Mucosa of descending colon (tissue), 3 donors: ENCODE measurements at regions of chr3 and their contacts with region 1.

Region 1: DNA sequence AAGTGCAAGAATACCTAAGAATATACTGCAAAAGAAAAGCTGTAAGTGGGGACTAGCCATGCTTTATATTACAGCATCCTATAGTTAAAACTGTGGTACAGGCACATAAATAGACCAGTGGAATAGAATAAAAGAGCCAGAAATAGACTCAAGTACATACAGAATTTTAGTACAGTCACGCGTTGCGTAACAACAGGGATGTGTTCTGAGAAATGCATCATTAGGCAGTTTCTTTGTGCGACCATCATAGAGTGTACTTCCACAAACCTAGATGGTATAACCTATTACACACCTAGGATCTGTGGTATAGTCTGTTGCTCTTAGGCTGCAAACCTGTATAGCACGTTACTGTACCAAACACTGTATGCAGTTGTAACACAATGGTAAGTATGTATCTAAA is 61.8 kb downstream of the PCCB start:
- DNase-seq: no peak
- ATAC-seq: no peak
- H3K4me3 ChIP-seq: no peak overlapping the region
- H3K4me1 ChIP-seq: no peaks in the 10 kb centered on the region
- CTCF ChIP-seq: no peak

Region 2: GRCh38 chr3:136297826-136298225 is 14.1 kb before region 1 on chr3:
- intact Hi-C with region 1: loop called in 1 of 2 experiments (anchors 2 kb)
- DNase-seq: no peak
- ATAC-seq: no peak
- H3K4me3 ChIP-seq: no peak overlapping the region
- H3K4me1 ChIP-seq: no peaks in the 10 kb centered on the region
- CTCF ChIP-seq: no peak

Region 3: GRCh38 chr3:136444581-136444980 is 132.6 kb after region 1 on chr3:
- intact Hi-C with region 1: no loop called
- DNase-seq: no peak
- ATAC-seq: no peak
- H3K4me3 ChIP-seq: no peak overlapping the region
- H3K4me1 ChIP-seq: no peaks in the 10 kb centered on the region
- CTCF ChIP-seq: no peak